ENCODE measurements at regions of chr13 and their contacts with region 1.

Region 1: DNA sequence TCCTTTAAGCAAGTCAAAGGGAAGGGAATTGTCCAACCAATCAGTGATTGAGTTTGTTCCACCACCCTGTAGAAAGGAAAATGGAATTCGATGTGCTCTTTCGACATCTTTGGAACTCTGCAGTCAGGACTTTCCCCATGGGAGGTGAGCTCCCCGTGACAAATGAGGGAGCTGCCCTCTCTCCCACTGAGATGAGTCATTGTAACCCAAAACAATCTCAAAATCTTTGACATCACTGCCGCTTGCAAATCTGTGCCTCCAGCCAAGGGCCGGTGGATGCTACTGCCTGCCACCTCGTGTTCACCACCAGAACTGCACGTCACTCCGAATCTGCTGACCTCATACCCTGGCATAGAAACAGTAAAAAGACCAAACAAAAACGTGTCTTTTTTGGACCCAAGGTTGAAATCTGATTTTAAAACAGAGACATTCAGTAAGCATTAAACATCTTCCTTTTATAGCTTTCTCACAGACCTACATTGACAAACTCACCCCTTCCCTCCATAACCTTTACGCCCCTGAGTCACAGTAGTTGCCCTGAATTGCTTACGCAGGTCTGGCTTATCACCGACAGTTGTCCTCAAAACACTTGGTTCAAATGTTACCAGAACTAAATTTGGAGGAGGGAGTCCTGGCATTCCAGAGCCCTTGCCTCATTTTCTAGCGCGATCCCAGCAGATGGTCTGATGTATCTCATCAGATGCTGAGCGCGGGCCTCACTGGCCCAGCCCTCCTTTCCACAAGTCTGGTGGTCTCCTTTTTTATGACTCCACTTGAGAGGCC is 105.2 kb downstream of the COL4A2 start:
- DNase-seq: peak; percentile 89 to 94 (median 94)
- H3K4me3 ChIP-seq: no peak overlapping the region
- H3K27ac ChIP-seq: peak overlapping the region; percentile 48 to 72
- H3K4me1 ChIP-seq: peaks cover 19% of the 10 kb centered on the region
- H3K27me3 ChIP-seq: no peaks in the 10 kb centered on the region
- CTCF ChIP-seq: peak; percentile 72 to 97 (median 94)
- EP300 ChIP-seq: peak; percentile 95
- POLR2A ChIP-seq: no peak

Region 2: DNA sequence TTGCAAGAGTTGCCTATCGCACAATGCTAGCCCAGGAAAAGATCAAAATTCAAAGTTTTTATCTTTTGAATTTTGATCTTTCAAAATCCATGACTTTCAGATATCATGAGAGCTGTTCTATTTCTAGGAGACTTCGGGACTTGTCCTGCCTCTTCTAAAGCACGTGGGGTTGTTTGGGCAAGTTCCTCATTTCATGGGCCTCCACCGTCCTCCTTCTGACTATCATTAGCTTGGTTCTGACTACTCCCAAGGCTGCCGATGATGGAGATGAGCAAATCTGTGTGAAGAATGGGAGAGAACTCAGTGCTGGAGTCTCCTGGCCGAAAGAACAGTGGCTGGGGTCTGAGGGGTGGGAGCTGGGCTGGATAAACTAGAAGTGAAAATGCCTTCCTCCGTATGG is 191.9 kb before region 1 on chr13:
- intact Hi-C with region 1: loop called in 2 of 4 experiments (anchors 5 to 10 kb)
- DNase-seq: no peak
- H3K4me3 ChIP-seq: no peak overlapping the region
- H3K27ac ChIP-seq: peak overlapping the region in 1 of 2 donors; percentile 87
- H3K4me1 ChIP-seq: peaks cover 11% of the 10 kb centered on the region
- H3K27me3 ChIP-seq: no peaks in the 10 kb centered on the region
- CTCF ChIP-seq: no peak
- EP300 ChIP-seq: no peak
- POLR2A ChIP-seq: no peak

Region 3: GRCh38 chr13:110225609-110226562 is 186.4 kb before region 1 on chr13:
- intact Hi-C with region 1: loop called in 2 of 4 experiments (anchors 5 to 10 kb)
- DNase-seq: no peak
- H3K4me3 ChIP-seq: no peak overlapping the region
- H3K27ac ChIP-seq: no peak overlapping the region
- H3K4me1 ChIP-seq: peaks cover 5% of the 10 kb centered on the region
- H3K27me3 ChIP-seq: no peaks in the 10 kb centered on the region
- CTCF ChIP-seq: no peak
- EP300 ChIP-seq: no peak
- POLR2A ChIP-seq: no peak

Region 4: DNA sequence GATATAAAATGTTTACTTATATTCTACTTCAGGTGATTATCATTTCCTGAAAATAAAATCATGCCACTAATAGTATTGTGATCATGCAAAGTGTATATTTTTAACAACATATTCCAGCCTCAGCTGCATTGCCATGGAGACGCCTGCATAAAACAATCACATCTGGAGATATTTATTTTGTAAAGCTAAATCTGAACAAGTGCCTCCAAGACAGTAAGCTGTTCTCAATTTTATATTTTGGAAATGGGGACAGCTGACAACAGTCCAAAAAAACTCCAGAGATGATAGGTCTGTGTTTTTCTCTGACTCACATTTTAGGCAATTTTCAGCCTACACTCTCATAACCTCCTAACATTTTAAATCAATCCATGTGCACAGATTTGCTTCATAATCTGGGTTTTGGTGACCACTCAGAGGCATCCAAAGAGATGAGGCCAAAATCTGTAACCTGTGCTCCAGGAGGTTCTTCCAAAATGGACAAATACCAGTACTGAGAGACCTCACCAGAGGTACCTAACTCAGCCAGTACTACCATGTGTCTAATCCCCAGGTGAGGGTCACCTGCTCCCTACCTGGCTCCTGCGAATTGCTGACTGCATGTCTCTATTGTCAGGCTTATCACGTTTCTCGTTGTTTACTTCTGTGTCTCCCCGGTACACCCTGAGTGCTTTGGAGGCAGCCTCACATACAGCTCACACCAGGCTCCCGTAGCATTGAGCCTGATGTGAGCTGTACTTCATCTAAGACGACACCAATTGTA is 168.1 kb before region 1 on chr13:
- intact Hi-C with region 1: loop called in 3 of 4 experiments (anchors 5 to 10 kb)
- DNase-seq: no peak
- H3K4me3 ChIP-seq: no peak overlapping the region
- H3K27ac ChIP-seq: no peak overlapping the region
- H3K4me1 ChIP-seq: peaks cover 22% of the 10 kb centered on the region
- H3K27me3 ChIP-seq: no peaks in the 10 kb centered on the region
- CTCF ChIP-seq: no peak
- EP300 ChIP-seq: no peak
- POLR2A ChIP-seq: no peak

Region 5: DNA sequence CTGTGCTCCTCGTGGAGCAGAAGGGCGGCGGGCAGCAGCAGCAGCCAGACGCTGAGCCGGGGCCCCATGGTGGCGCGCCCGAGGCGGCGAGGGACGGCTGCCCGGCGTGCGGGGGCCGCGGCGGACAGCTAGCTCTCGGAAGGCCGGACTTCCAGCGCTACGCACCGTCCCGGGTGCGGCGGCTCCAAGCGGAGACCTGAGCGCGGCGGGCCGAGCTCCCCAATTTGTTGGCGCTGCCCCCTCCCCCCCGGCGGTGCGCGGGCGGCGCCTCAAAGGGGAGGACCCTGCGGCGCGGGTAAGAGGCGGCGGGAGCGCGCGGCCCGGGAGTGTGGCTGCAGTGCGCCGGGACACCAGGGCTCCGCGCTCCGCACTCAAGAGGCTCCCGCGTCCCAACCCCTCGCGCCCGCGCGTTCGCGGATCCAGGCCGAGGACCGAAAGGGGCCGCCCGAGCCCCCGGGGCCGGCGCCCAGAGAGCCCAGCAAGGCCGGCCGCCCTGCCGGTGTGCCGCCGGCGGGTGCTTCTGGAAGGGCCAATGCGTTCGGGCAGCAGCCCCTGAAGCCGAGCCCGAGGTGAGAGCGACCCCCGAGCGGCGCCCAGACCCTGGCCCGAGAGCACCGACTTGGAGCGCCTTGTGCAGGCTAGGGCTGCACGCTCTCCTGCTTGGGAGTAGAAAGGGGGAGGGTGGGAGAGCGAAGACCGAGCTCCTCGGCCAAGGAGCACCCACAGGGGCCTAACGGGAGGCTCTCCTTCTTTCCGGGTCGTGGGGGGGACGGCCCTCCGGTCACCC is 105.2 kb before region 1 on chr13 and contains the starts of genes COL4A1 and COL4A2:
- intact Hi-C with region 1: loop called (anchors 5 to 10 kb)
- DNase-seq: peak; percentile 83 to 90 (median 89)
- H3K4me3 ChIP-seq: peak within 1 kb of the TSS; percentile 85
- H3K27ac ChIP-seq: peak within 1 kb of the TSS; percentile 87 to 93
- H3K4me1 ChIP-seq: peaks cover 27% of the 10 kb centered on the region
- H3K27me3 ChIP-seq: no peaks in the 10 kb centered on the region
- CTCF ChIP-seq: peak in 2 of 3 donors; percentile 4 to 35
- EP300 ChIP-seq: no peak
- POLR2A ChIP-seq: peak; percentile 93
- total RNA-seq, gene COL4A1: 42.3 to 106 (median 73.2) TPM
- total RNA-seq, gene COL4A2: 59.5 to 171 (median 120) TPM

Region 6: GRCh38 chr13:110319774-110320509 is 92.4 kb before region 1 on chr13:
- intact Hi-C with region 1: loop called in 1 of 4 experiments (anchors 10 kb)
- DNase-seq: no peak
- H3K4me3 ChIP-seq: no peak overlapping the region
- H3K27ac ChIP-seq: no peak overlapping the region
- H3K4me1 ChIP-seq: peaks cover 17% of the 10 kb centered on the region
- H3K27me3 ChIP-seq: no peaks in the 10 kb centered on the region
- CTCF ChIP-seq: no peak
- EP300 ChIP-seq: no peak
- POLR2A ChIP-seq: no peak

Region 7: GRCh38 chr13:110340812-110341444 is 71.4 kb before region 1 on chr13:
- intact Hi-C with region 1: loop called in 1 of 4 experiments (anchors 5 kb)
- DNase-seq: peak; percentile 72 to 85 (median 83)
- H3K4me3 ChIP-seq: peak overlapping the region; percentile 10
- H3K27ac ChIP-seq: peak overlapping the region; percentile 73 to 86
- H3K4me1 ChIP-seq: peaks cover 27% of the 10 kb centered on the region
- H3K27me3 ChIP-seq: no peaks in the 10 kb centered on the region
- CTCF ChIP-seq: no peak
- EP300 ChIP-seq: peak; percentile 85
- POLR2A ChIP-seq: no peak

Measured in ovary (tissue), 10 donors.